ENCODE measurements at regions of chr15 and their contacts with region 1.

Region 1: DNA sequence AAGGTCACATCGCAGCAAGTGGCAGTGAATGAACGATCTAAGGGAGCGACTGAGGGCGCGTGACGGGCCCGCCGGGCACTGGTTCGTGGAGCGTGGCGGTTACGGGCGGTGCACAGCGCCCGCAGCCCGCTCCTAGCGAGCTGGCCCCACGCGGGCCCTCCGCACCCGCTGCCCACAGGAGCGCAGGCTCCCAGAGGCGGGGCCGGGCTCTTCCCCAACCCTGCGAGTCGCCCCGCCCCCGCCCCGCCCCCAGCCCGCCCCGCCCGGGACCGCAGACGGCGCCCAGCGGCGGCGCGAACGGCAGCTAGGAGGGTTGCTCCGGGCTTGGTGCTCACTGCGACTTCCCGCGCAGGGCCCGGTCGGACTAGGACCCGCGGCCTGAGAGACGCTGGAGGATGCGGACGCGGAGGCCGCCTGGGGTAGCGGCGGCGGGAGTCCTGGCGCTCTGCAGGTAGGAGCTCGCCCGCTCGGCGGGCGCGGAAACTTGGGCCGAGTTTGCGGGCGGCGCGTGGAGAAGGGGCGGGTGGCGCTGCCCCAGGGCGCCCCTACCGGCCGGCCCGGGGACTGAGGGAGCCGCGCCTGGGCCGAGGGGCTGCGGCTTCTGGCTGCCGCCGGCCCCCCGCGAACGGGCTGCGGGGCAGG is at the start of gene C15orf39:
- DNase-seq: peak; percentile 76
- H3K4me3 ChIP-seq: peak within 1 kb of the TSS; percentile 65 to 98 (median 82)
- H3K27ac ChIP-seq: peak within 1 kb of the TSS; percentile 79
- H3K4me1 ChIP-seq: peaks cover 27% of the 10 kb centered on the region
- H3K27me3 ChIP-seq: no peaks in the 10 kb centered on the region
- CTCF ChIP-seq: peak; percentile 66 to 92
- POLR2A ChIP-seq: peak; percentile 95
- total RNA-seq, gene C15orf39: 33.6 and 36.1 TPM in 2 replicates

Region 2: GRCh38 chr15:74781431-74782258 is 420.1 kb before region 1 on chr15 and contains the start of gene CSK:
- CTCF ChIA-PET with region 1: no interaction called
- POLR2A ChIA-PET with region 1: no interaction called
- dilution Hi-C with region 1: no loop called
- intact Hi-C with region 1: loop called (anchors 10 kb)
- DNase-seq: peak; percentile 53
- H3K4me3 ChIP-seq: peak within 1 kb of the TSS; percentile 88 to 94 (median 90)
- H3K27ac ChIP-seq: peak within 1 kb of the TSS; percentile 62
- H3K4me1 ChIP-seq: peaks cover 37% of the 10 kb centered on the region
- H3K27me3 ChIP-seq: no peaks in the 10 kb centered on the region
- CTCF ChIP-seq: peak; percentile 52 to 65
- POLR2A ChIP-seq: peak; percentile 67
- total RNA-seq, gene CSK: 89.1 and 104 TPM in 2 replicates

Region 3: GRCh38 chr15:75023181-75023871 is 178.4 kb before region 1 on chr15 and contains the start of gene PPCDC:
- CTCF ChIA-PET with region 1: interaction called, 213 read pairs
- POLR2A ChIA-PET with region 1: interaction called, 5 read pairs
- dilution Hi-C with region 1: no loop called
- intact Hi-C with region 1: no loop called
- DNase-seq: peak; percentile 96
- H3K4me3 ChIP-seq: peak within 1 kb of the TSS; percentile 62 to 88 (median 81)
- H3K27ac ChIP-seq: peak within 1 kb of the TSS; percentile 80
- H3K4me1 ChIP-seq: no peaks in the 10 kb centered on the region
- H3K27me3 ChIP-seq: no peaks in the 10 kb centered on the region
- CTCF ChIP-seq: no peak
- POLR2A ChIP-seq: peak; percentile 97
- total RNA-seq, gene PPCDC: 14.5 and 16.8 TPM in 2 replicates

Region 4: GRCh38 chr15:75036314-75036649 is 165.4 kb before region 1 on chr15:
- CTCF ChIA-PET with region 1: interaction called, 213 read pairs
- POLR2A ChIA-PET with region 1: interaction called, 5 read pairs
- dilution Hi-C with region 1: no loop called
- intact Hi-C with region 1: no loop called
- DNase-seq: no peak
- H3K4me3 ChIP-seq: no peak overlapping the region
- H3K27ac ChIP-seq: no peak overlapping the region
- H3K4me1 ChIP-seq: peaks cover 17% of the 10 kb centered on the region
- H3K27me3 ChIP-seq: no peaks in the 10 kb centered on the region
- CTCF ChIP-seq: no peak
- POLR2A ChIP-seq: no peak

Region 5: GRCh38 chr15:75090388-75090734 is 111.4 kb before region 1 on chr15:
- CTCF ChIA-PET with region 1: interaction called, 4 read pairs
- POLR2A ChIA-PET with region 1: interaction called, 7 read pairs
- dilution Hi-C with region 1: no loop called
- intact Hi-C with region 1: loop called (anchors 1 kb)
- DNase-seq: peak; percentile 93
- H3K4me3 ChIP-seq: no peak overlapping the region
- H3K27ac ChIP-seq: peak overlapping the region; percentile 90
- H3K4me1 ChIP-seq: peaks cover 11% of the 10 kb centered on the region
- H3K27me3 ChIP-seq: no peaks in the 10 kb centered on the region
- CTCF ChIP-seq: no peak
- POLR2A ChIP-seq: peak; percentile 46

Region 6: DNA sequence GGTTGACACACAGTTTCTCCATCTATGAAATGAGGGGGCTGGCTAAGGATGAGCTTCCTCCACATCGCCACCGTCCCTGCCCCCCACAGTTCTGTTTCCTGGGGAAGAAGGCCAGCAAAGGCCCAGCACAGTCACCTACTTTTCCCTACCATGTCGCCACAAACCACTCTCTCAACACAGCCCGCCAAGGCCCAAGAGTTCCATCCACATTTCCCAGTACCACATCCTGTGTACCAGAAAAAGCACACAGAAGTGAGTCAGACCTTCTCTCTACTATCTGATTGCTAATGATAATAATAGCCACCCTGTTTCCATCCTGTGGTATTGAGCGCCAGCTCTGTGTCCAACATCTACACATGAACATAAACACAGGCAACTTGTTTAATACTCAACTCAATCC is 30.3 kb before region 1 on chr15:
- CTCF ChIA-PET with region 1: interaction called, 11 read pairs
- POLR2A ChIA-PET with region 1: interaction called, 4 read pairs
- dilution Hi-C with region 1: no loop called
- intact Hi-C with region 1: no loop called
- DNase-seq: peak; percentile 58
- H3K4me3 ChIP-seq: no peak overlapping the region
- H3K27ac ChIP-seq: no peak overlapping the region
- H3K4me1 ChIP-seq: peaks cover 13% of the 10 kb centered on the region
- H3K27me3 ChIP-seq: no peaks in the 10 kb centered on the region
- CTCF ChIP-seq: no peak
- POLR2A ChIP-seq: no peak

Region 7: DNA sequence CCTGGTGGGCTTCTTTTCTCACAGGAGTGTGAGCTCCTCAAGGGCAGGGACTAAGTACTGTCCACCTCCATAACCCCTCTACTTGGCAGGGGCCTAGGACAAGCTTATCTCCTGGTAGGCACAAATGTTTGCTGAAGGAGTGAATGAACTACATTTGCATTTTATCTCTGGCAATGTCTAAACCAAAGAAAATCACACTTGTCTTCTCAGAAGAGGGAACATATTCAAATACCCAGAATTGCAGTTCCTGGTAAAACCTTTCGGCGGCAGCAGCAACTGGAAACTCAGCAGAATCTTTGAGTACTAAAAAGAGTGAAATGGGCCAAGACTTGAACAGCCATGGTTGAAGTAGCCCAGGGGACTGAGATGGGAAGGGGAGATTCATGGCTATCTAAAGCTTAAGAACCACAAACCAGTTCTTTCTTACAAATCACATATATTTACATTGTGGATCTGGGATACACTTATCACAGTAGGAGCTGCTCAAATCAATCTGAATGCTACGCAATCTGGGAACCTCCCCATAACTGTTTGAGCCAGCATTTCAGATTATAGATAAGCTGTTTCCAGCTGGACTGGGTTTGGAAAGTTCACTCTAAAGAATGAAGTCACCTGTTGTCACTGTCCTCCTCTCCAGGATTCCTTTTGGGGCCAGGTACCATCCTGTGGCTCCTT is 396.1 kb after region 1 on chr15:
- CTCF ChIA-PET with region 1: no interaction called
- POLR2A ChIA-PET with region 1: no interaction called
- dilution Hi-C with region 1: no loop called
- intact Hi-C with region 1: no loop called
- DNase-seq: peak; percentile 36
- H3K4me3 ChIP-seq: no peak overlapping the region
- H3K27ac ChIP-seq: no peak overlapping the region
- H3K4me1 ChIP-seq: peaks cover 9% of the 10 kb centered on the region
- H3K27me3 ChIP-seq: no peaks in the 10 kb centered on the region
- CTCF ChIP-seq: peak; percentile 15 to 30
- POLR2A ChIP-seq: no peak

Measured in endothelial cell of umbilical vein (primary cell).